GM13977 (cell line): ENCODE measurements at regions of chr6 and their contacts with region 1.

Region 1: DNA sequence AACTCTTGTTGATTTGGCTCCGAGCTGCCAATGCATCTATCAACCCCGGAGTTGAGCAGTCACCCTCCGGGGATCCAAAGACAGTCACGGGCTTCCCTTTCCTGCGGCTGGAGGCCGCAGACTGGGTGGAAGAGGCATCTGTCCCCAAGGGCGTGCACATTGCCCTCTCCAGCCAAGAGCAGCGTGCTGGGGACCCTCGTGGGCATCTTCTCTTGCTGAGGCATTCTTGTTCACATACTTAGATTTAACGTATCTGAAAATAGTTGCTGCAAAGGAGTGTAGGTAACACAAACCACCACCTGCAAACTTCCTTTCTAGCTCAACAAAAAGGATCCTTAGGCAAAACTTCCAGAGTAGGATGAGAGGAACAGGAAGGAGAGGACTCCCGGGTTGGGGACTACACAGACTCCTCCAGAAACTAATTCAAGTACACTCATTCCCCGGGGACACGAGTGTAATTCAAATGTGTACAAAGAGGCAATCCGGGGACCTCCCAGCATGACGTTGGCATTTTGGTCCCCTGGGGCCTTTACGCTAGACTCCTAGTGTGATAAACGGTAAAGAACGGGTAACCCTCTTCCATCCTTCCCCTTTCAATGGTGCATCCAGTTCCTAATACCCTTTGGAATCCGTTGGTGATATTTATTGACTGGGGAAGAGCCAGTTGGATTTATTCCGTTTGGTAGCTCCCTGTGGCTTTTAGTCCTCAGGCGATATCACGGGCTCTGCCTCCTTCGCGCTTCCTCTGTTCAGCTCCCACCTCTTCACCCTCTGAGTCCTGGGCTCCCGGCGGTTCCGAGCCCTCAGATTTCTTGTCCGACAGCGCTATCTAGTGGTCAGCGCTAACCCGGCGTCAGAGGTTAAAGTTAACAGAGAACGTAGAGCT is 2.7 kb upstream of the COL12A1 start:
- DNase-seq: peak; percentile 72
- CTCF ChIP-seq: peak; percentile 95

Region 2: DNA sequence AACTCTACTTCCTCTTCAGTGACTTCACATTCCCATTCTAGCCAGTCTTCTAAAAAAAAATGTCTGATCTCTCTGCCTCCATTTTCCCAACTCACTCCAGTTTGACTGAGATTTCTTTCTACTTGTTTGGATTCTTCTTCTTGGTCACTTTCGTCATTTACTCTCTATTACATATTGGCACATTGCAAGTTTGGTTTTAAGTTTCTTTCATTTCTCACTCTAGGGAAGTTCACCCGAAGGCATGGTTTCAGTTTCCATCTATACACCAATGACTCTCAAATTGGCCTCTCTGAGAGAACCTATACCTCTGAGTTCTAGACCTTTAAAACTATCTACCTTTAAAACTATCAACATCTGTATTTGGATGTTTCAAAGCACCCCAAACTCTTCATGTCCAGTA is 1461.3 kb before region 1 on chr6:
- in situ Hi-C with region 1: loop called (anchors 10 kb)
- DNase-seq: peak; percentile 34
- CTCF ChIP-seq: no peak

Region 3: DNA sequence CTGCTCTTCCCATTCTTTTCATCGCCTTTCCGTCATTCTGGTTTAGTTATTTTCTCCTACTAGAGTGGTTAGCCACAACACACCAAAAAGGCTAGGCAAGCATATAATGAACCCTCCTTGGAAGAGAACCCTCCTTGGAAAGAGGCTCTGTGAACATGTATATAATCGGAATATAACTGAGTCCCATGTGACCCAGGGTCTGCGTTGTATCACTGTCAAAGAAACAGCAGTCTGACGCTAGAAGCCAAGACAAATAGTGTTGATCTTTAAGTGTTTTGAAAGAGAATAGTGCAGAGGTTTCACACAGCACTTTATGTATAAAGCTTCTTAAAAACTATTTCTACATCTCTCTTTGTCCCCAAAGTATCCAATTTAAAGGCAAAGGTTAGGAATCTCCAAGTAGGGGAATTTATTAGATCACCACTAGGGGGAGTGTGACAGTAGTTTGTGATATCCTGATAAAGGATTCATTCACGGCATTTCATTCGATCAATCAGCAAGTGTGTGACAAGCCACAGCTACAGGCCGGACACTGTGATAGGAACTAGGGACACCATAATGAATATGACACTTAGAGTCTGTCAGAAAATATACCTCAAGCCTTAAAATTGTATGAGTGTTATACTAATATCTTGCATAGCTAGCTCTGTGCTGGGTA is 1117.3 kb before region 1 on chr6:
- in situ Hi-C with region 1: loop called (anchors 25 kb)
- DNase-seq: peak; percentile 24
- CTCF ChIP-seq: peak; percentile 65

Region 4: GRCh38 chr6:74409447-74409846 is 799.1 kb before region 1 on chr6:
- in situ Hi-C with region 1: loop called (anchors 25 kb)
- DNase-seq: peak; percentile 2
- CTCF ChIP-seq: peak; percentile 49

Region 5: GRCh38 chr6:75098709-75099108 is 109.8 kb before region 1 on chr6:
- in situ Hi-C with region 1: no loop called
- DNase-seq: no peak
- CTCF ChIP-seq: no peak

Region 6: DNA sequence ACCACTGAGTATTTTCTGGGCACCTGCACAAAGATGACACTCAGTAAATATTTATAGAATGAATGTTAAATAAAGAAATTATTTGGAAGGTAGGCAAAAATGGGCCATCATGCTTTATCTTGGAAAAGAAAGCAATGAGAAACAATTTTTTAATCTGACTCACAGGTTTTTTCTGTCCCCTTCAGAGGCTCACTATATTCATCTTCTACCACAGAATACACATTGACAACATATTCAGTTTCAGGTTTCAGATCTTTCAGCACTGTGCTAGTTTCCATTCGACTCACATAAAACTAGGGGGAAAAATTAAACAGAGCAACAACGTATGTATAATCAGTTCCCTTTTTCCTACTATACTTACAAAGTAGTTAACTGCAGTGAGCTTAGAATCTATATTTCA is 61.0 kb before region 1 on chr6:
- in situ Hi-C with region 1: no loop called
- DNase-seq: peak; percentile 12
- CTCF ChIP-seq: no peak